ENCODE measurements at regions of chr6 and their contacts with region 1.

Region 1: GRCh38 chr6:38493931-38494547 is 145.7 kb downstream of the BTBD9 start:
- DNase-seq: peak; percentile 57 to 85 (median 76)
- ATAC-seq: peak; percentile 46
- H3K4me3 ChIP-seq: no peak overlapping the region
- H3K4me3 Mint-ChIP-seq: no peak overlapping the region
- H3K27ac ChIP-seq: no peak overlapping the region
- H3K27ac Mint-ChIP-seq: no peak overlapping the region
- H3K4me1 ChIP-seq: no peaks in the 10 kb centered on the region
- H3K4me1 Mint-ChIP-seq: no peaks in the 10 kb centered on the region
- H3K27me3 ChIP-seq: no peaks in the 10 kb centered on the region
- H3K27me3 Mint-ChIP-seq: no peaks in the 10 kb centered on the region
- CTCF ChIP-seq: peak; percentile 99

Region 2: GRCh38 chr6:37324131-37325033 is 1169.7 kb before region 1 on chr6:
- CTCF ChIA-PET with region 1: no interaction called
- POLR2A ChIA-PET with region 1: no interaction called
- intact Hi-C with region 1: loop called (anchors 1 to 2 kb)
- DNase-seq: no peak
- ATAC-seq: no peak
- H3K4me3 ChIP-seq: no peak overlapping the region
- H3K4me3 Mint-ChIP-seq: no peak overlapping the region
- H3K27ac ChIP-seq: no peak overlapping the region
- H3K27ac Mint-ChIP-seq: no peak overlapping the region
- H3K4me1 ChIP-seq: no peaks in the 10 kb centered on the region
- H3K4me1 Mint-ChIP-seq: no peaks in the 10 kb centered on the region
- H3K27me3 ChIP-seq: no peaks in the 10 kb centered on the region
- H3K27me3 Mint-ChIP-seq: no peaks in the 10 kb centered on the region
- CTCF ChIP-seq: no peak

Region 3: DNA sequence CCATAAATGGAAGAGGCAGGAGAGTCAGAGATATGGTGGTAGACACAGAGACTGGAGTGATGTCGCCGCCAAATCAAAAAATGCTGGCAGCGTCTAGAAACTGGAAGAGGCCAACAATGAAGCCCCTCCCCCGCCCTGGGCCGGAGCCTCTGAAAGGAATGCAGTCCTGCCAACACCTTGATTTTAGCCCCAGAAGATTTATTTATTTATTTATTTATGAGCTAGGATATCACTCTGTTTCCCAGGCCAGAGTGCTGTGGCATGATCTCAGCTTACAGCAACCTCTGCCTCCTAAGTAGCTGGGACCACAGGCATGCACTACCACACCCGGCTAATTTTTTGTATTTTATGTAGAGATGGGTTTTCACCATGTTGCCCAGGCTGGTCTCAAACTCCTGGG is 911.7 kb before region 1 on chr6:
- CTCF ChIA-PET with region 1: no interaction called
- POLR2A ChIA-PET with region 1: no interaction called
- intact Hi-C with region 1: loop called in 1 of 2 experiments (anchors 5 kb)
- DNase-seq: no peak
- ATAC-seq: no peak
- H3K4me3 ChIP-seq: no peak overlapping the region
- H3K4me3 Mint-ChIP-seq: no peak overlapping the region
- H3K27ac ChIP-seq: no peak overlapping the region
- H3K27ac Mint-ChIP-seq: no peak overlapping the region
- H3K4me1 ChIP-seq: no peaks in the 10 kb centered on the region
- H3K4me1 Mint-ChIP-seq: no peaks in the 10 kb centered on the region
- H3K27me3 ChIP-seq: no peaks in the 10 kb centered on the region
- H3K27me3 Mint-ChIP-seq: no peaks in the 10 kb centered on the region
- CTCF ChIP-seq: no peak

Region 4: GRCh38 chr6:37791156-37791919 is 702.7 kb before region 1 on chr6:
- CTCF ChIA-PET with region 1: interaction called, 5 read pairs
- POLR2A ChIA-PET with region 1: no interaction called
- intact Hi-C with region 1: loop called (anchors 1 to 2 kb)
- DNase-seq: peak; percentile 44 to 84 (median 80)
- ATAC-seq: peak; percentile 99
- H3K4me3 ChIP-seq: no peak overlapping the region
- H3K4me3 Mint-ChIP-seq: no peak overlapping the region
- H3K27ac ChIP-seq: no peak overlapping the region
- H3K27ac Mint-ChIP-seq: no peak overlapping the region
- H3K4me1 ChIP-seq: peaks cover 7% of the 10 kb centered on the region
- H3K4me1 Mint-ChIP-seq: peaks cover 3% of the 10 kb centered on the region
- H3K27me3 ChIP-seq: no peaks in the 10 kb centered on the region
- H3K27me3 Mint-ChIP-seq: no peaks in the 10 kb centered on the region
- CTCF ChIP-seq: peak; percentile 66

Region 5: GRCh38 chr6:38404900-38405556 is 89.0 kb before region 1 on chr6:
- CTCF ChIA-PET with region 1: no interaction called
- POLR2A ChIA-PET with region 1: no interaction called
- intact Hi-C with region 1: no loop called
- DNase-seq: no peak
- ATAC-seq: no peak
- H3K4me3 ChIP-seq: no peak overlapping the region
- H3K4me3 Mint-ChIP-seq: no peak overlapping the region
- H3K27ac ChIP-seq: no peak overlapping the region
- H3K27ac Mint-ChIP-seq: no peak overlapping the region
- H3K4me1 ChIP-seq: no peaks in the 10 kb centered on the region
- H3K4me1 Mint-ChIP-seq: peaks cover 10% of the 10 kb centered on the region
- H3K27me3 ChIP-seq: no peaks in the 10 kb centered on the region
- H3K27me3 Mint-ChIP-seq: no peaks in the 10 kb centered on the region
- CTCF ChIP-seq: no peak

Region 6: GRCh38 chr6:38508894-38509293 is 14.9 kb after region 1 on chr6:
- CTCF ChIA-PET with region 1: interaction called, 21 read pairs
- POLR2A ChIA-PET with region 1: no interaction called
- intact Hi-C with region 1: no loop called
- DNase-seq: no peak
- ATAC-seq: no peak
- H3K4me3 ChIP-seq: no peak overlapping the region
- H3K4me3 Mint-ChIP-seq: no peak overlapping the region
- H3K27ac ChIP-seq: no peak overlapping the region
- H3K27ac Mint-ChIP-seq: no peak overlapping the region
- H3K4me1 ChIP-seq: no peaks in the 10 kb centered on the region
- H3K4me1 Mint-ChIP-seq: no peaks in the 10 kb centered on the region
- H3K27me3 ChIP-seq: no peaks in the 10 kb centered on the region
- H3K27me3 Mint-ChIP-seq: no peaks in the 10 kb centered on the region
- CTCF ChIP-seq: no peak

Region 7: GRCh38 chr6:40042242-40042641 is 1548.2 kb after region 1 on chr6:
- CTCF ChIA-PET with region 1: no interaction called
- POLR2A ChIA-PET with region 1: no interaction called
- intact Hi-C with region 1: no loop called
- DNase-seq: no peak
- ATAC-seq: no peak
- H3K4me3 ChIP-seq: no peak overlapping the region
- H3K4me3 Mint-ChIP-seq: no peak overlapping the region
- H3K27ac ChIP-seq: no peak overlapping the region
- H3K27ac Mint-ChIP-seq: no peak overlapping the region
- H3K4me1 ChIP-seq: no peaks in the 10 kb centered on the region
- H3K4me1 Mint-ChIP-seq: no peaks in the 10 kb centered on the region
- H3K27me3 ChIP-seq: no peaks in the 10 kb centered on the region
- H3K27me3 Mint-ChIP-seq: peaks cover 15% of the 10 kb centered on the region
- CTCF ChIP-seq: no peak